ENCODE measurements at regions of chr14 and their contacts with region 1.

Region 1: DNA sequence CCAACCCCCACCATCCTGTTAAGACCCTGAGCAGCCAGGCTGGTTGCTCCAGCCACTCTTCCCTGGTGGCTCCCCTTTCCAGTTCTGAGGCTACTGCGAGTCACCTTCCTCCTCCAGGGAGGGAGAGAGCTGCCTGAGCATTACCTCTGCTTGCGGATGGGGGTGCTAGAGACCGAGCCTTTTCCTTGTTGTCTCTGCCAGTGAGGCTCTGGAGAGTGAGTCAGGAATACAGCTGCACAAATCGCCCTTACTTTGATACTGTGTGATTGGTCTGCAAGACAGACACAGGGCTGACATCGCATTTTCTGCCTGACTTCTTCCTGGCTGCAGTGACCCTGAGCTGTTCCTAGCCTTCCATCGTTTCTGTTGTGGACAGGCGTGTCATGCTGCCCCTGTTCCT is 94.3 kb downstream of the SLC25A47 start:
- DNase-seq: peak; percentile 79
- ATAC-seq: peak; percentile 98
- H3K4me3 Mint-ChIP-seq: no peak overlapping the region
- H3K27ac Mint-ChIP-seq: peak overlapping the region; percentile 70; the same call in 1 of the 2 replicates
- H3K4me1 Mint-ChIP-seq: peaks cover 13% of the 10 kb centered on the region
- H3K27me3 Mint-ChIP-seq: no peaks in the 10 kb centered on the region
- CTCF ChIP-seq: peak; percentile 59

Region 2: GRCh38 chr14:100391724-100392123 is 25.7 kb before region 1 on chr14:
- CTCF ChIA-PET with region 1: interaction called, 13 read pairs
- POLR2A ChIA-PET with region 1: no interaction called
- DNase-seq: no peak
- ATAC-seq: no peak
- H3K4me3 Mint-ChIP-seq: no peak overlapping the region
- H3K27ac Mint-ChIP-seq: no peak overlapping the region
- H3K4me1 Mint-ChIP-seq: peaks cover 24% of the 10 kb centered on the region
- H3K27me3 Mint-ChIP-seq: no peaks in the 10 kb centered on the region
- CTCF ChIP-seq: no peak

Region 3: DNA sequence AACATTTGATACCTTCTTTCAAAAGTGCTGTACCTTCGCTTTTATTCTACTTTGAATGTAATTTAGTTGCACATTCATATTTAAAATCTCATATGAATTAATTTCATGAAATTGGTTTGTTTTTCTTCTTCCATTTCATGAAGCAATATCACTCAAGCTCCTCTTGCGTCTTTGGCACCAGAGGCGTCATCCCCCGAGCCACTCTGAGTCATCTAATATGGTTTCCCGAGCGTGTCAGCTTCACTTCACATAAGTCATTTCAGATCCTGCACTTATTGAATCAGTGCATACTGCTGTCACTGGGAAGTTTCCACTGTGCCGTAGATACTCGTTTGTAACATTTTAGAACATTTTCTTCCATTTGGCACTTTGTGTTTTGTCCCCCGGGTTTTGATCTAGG is 11.3 kb after region 1 on chr14:
- CTCF ChIA-PET with region 1: interaction called, 20 read pairs
- POLR2A ChIA-PET with region 1: no interaction called
- DNase-seq: no peak
- ATAC-seq: no peak
- H3K4me3 Mint-ChIP-seq: no peak overlapping the region
- H3K27ac Mint-ChIP-seq: no peak overlapping the region
- H3K4me1 Mint-ChIP-seq: peaks cover 17% of the 10 kb centered on the region
- H3K27me3 Mint-ChIP-seq: no peaks in the 10 kb centered on the region
- CTCF ChIP-seq: no peak

Region 4: DNA sequence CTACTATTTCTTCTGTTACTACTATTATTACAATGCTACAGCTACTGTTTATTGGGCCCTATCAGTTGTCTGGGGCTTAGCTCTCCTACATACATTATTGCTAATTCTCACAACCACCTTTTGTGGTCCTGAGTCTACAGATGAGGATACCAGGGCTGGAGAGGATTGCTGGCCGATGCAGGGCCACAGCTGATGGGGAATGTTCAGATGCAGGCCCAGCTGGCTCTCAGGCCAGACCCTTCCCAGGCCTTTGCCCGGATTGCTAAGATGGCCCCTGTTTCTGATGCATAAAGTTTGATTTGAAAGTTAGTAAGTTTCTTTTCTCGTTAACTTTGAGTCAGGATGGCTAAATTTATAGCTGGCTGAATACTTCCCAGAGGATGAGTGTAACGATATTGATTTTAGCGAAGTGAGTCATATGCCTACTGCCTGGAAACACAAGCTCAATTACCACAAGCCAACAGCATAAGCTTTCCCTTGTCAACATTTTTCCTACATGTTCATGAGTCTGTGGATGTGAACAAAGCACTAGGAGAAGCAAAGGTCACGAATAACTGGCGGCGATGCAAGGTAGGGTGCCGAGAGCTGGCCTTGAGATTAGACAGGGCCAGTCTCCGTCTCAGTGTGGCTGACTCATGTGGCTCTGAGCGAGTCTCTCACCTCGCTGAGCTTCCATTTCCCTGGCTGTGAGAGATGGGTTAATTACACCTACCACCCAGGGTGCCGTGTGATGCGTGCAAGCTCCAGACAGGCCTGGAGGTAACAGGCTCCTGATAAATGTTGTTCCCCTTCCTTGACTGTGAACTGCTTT is 58.8 kb after region 1 on chr14:
- CTCF ChIA-PET with region 1: interaction called, 12 read pairs
- POLR2A ChIA-PET with region 1: no interaction called
- DNase-seq: no peak
- ATAC-seq: no peak; the same call in 1 of the 2 replicates
- H3K4me3 Mint-ChIP-seq: no peak overlapping the region
- H3K27ac Mint-ChIP-seq: peak overlapping the region; percentile 48; the same call in 1 of the 2 replicates
- H3K4me1 Mint-ChIP-seq: no peaks in the 10 kb centered on the region
- H3K27me3 Mint-ChIP-seq: no peaks in the 10 kb centered on the region
- CTCF ChIP-seq: no peak

Region 5: DNA sequence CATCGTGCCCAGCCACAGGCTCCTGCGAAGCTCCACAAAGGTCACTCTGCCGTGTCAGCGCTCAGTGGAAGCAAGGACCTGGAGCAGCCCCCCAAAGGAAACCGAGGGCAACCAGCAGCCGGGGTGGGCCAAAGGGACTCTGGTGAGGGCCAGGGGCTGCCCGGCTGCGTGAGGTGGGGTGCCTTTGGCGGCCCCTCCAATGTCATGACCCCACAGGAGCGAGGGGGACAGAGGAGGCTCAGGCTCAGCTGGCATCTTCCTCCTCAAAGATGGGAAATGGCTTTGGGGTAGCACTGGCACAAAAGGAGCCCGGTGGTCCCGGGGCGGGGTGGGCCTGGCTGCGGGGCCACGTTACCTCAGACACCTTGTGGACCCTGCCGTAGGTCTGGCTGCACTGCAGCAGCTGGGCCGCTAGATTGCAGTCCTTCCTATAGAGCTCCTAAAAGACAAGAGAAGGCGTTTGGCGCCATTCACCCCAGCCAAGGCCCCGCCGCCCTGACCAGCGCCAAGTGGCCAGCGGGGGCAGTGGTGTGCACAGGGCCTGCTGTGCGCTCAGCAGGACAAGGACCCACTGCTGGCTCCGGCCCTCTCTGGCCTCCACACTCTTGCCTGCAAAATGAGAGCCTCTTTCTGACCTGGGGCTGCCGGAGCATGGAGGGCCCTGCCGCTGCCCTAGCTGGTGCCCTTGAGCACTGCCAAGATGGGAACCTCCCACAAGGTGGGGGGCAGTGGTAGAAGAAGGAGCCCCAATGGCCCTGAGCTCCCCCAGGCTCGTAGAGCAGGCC is 122.9 kb after region 1 on chr14:
- CTCF ChIA-PET with region 1: interaction called, 10 read pairs
- POLR2A ChIA-PET with region 1: no interaction called
- DNase-seq: peak; percentile 63
- ATAC-seq: peak; percentile 72
- H3K4me3 Mint-ChIP-seq: no peak overlapping the region
- H3K27ac Mint-ChIP-seq: no peak overlapping the region
- H3K4me1 Mint-ChIP-seq: peaks cover 5% of the 10 kb centered on the region
- H3K27me3 Mint-ChIP-seq: no peaks in the 10 kb centered on the region; the same call in 1 of the 2 replicates
- CTCF ChIP-seq: peak; percentile 26; the same call in 1 of the 2 replicates